ENCODE measurements at regions of chr11 and their contacts with region 1.

Region 1: DNA sequence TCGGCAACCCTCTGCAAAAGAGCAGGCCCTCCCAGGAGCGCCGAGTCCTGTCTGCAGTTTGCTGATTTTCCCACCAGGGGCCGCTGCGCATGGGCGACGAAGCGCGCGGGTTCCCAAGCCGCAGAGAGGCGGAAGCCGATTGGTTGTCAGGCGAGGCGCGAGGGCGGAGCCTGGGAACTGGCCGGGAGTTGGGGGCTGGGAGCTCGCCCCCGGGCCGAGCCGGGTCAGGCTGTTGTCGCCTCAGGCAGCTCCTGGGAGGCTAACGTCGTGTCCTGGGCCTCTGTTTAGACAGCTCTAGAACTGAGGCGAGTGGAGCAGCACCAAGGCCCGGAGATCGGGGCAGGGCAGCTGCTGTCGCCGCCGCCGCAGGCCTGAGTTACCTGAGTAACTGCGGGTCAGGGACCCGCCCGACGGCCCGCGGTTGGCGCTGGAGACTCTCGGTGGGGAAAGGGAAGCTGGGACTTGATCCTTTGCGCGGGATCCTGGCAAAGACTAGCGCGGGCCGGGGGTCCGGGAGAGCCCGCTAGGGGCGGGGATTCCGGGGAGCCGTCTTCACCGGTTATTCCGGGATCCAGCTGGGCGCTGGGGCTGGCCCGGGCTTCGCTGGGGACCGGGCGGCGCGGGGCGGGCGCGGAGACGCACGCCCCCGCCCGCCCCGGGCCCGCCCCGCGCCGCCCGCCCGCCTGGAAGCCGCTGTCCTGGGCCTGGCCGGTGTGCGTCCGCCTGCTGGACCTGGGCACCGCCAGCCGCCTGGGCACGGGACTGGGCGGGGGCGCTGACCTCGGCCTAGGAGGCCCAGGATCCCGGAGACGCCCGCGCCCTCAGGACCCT is at the start of gene STIM1:
- DNase-seq: peak; percentile 96
- ATAC-seq: peak; percentile 74
- H3K4me3 Mint-ChIP-seq: peak within 1 kb of the TSS; percentile 96
- H3K27ac Mint-ChIP-seq: peak within 1 kb of the TSS; percentile 99
- H3K4me1 Mint-ChIP-seq: peaks cover 63% of the 10 kb centered on the region
- H3K27me3 Mint-ChIP-seq: no peaks in the 10 kb centered on the region
- CTCF ChIP-seq: peak; percentile 58
- total RNA-seq, gene STIM1: 37.3 and 38.4 TPM in 2 replicates

Region 2: GRCh38 chr11:3807909-3808860 is 47.0 kb before region 1 on chr11 and contains the start of gene PGAP2:
- CTCF ChIA-PET with region 1: interaction called, 12 read pairs
- POLR2A ChIA-PET with region 1: interaction called, 14 read pairs
- intact Hi-C with region 1: no loop called
- DNase-seq: peak; percentile 67
- ATAC-seq: peak; percentile 85
- H3K4me3 Mint-ChIP-seq: peak within 1 kb of the TSS; percentile 94
- H3K27ac Mint-ChIP-seq: peak within 1 kb of the TSS; percentile 68
- H3K4me1 Mint-ChIP-seq: peaks cover 13% of the 10 kb centered on the region
- H3K27me3 Mint-ChIP-seq: no peaks in the 10 kb centered on the region
- CTCF ChIP-seq: no peak
- total RNA-seq, gene PGAP2: 19.7 and 25.0 TPM in 2 replicates

Region 3: GRCh38 chr11:3867209-3868091 is 12.3 kb after region 1 on chr11:
- CTCF ChIA-PET with region 1: interaction called, 13 read pairs
- POLR2A ChIA-PET with region 1: interaction called, 81 read pairs
- intact Hi-C with region 1: loop called (anchors 1 kb)
- DNase-seq: no peak
- ATAC-seq: peak; percentile 49
- H3K4me3 Mint-ChIP-seq: peak overlapping the region; percentile 12
- H3K27ac Mint-ChIP-seq: peak overlapping the region; percentile 69
- H3K4me1 Mint-ChIP-seq: peaks cover 87% of the 10 kb centered on the region
- H3K27me3 Mint-ChIP-seq: no peaks in the 10 kb centered on the region
- CTCF ChIP-seq: no peak

Region 4: DNA sequence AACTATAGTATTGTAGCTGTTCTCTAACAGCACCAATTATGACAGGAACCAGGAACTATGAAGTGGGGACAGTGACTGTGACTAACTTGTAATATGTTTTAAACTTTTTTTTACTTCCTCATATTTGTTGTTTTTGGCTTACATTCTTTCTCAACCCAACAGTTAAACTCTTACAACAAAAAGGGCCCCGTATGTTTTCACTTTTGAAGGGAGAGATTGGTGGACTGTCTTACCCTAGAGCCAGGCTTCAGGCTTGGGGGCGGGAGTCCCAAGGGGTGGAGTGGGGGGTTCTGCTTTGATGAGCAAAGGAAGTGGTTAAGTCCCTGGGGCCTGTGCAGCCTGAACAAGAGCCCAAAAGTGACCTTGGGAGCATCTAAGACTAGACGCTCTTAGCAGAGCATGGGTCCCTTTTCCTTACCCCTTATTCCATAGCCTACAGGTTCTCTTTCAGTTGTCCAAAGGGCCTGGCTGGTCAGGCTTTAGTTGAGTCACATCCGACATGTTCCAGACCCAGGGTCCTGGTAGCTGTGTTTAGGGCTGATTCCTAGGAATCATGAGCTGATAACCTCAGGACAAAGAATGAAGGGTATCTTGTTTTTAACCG is 39.0 kb after region 1 on chr11:
- CTCF ChIA-PET with region 1: interaction called, 24 read pairs
- POLR2A ChIA-PET with region 1: interaction called, 75 read pairs
- intact Hi-C with region 1: loop called (anchors 1 kb)
- DNase-seq: peak; percentile 84
- ATAC-seq: peak; percentile 97
- H3K4me3 Mint-ChIP-seq: peak overlapping the region; percentile 74
- H3K27ac Mint-ChIP-seq: peak overlapping the region; percentile 88
- H3K4me1 Mint-ChIP-seq: peaks cover 72% of the 10 kb centered on the region
- H3K27me3 Mint-ChIP-seq: no peaks in the 10 kb centered on the region
- CTCF ChIP-seq: no peak

Region 5: GRCh38 chr11:3959015-3959919 is 104.1 kb after region 1 on chr11:
- CTCF ChIA-PET with region 1: interaction called, 34 read pairs
- POLR2A ChIA-PET with region 1: interaction called, 23 read pairs
- intact Hi-C with region 1: loop called (anchors 1 kb)
- DNase-seq: no peak
- ATAC-seq: peak; percentile 92
- H3K4me3 Mint-ChIP-seq: no peak overlapping the region
- H3K27ac Mint-ChIP-seq: peak overlapping the region; percentile 38
- H3K4me1 Mint-ChIP-seq: peaks cover 60% of the 10 kb centered on the region
- H3K27me3 Mint-ChIP-seq: no peaks in the 10 kb centered on the region
- CTCF ChIP-seq: no peak

Region 6: GRCh38 chr11:4065601-4066377 is 210.6 kb after region 1 on chr11:
- CTCF ChIA-PET with region 1: interaction called, 526 read pairs
- POLR2A ChIA-PET with region 1: interaction called, 32 read pairs
- intact Hi-C with region 1: no loop called
- DNase-seq: no peak
- ATAC-seq: no peak
- H3K4me3 Mint-ChIP-seq: no peak overlapping the region
- H3K27ac Mint-ChIP-seq: peak overlapping the region; percentile 25
- H3K4me1 Mint-ChIP-seq: peaks cover 38% of the 10 kb centered on the region
- H3K27me3 Mint-ChIP-seq: no peaks in the 10 kb centered on the region
- CTCF ChIP-seq: no peak